ENCODE measurements at regions of chr1 and their contacts with region 1.

Region 1: DNA sequence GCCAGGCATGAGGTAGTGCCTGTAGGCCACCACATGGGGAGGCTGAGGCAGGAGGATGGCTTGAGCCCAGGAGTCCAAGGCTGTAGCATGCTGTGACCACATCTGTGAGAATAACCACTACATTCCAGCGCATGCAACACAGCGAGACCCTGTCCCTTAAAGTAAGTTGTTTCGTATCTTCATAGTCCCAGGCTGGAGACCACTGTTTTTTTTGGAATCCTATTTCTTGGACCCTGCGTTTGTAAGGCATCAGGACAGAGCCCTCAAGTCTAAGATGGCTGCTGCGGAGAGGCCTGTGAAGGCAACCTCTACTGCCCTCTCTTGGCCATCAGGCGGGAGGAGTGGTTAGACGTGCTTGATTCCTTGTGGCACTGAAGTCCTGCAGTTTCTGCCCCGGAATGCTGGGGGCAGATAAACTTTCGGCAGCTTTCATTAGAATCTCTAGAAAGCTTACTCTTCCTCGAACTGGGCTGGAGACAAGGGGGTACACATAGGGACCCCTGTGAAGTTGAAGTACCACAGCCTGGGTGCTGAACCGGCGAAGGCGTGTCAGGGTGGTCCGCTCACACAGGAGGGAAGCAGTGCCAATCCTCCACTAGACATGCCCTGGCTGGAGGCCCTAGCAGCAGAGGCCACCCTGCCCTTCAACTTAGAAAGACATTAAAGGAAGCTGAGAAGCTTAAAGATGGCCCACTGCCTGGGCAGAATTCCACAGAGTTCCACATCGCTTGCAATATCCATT is 36.6 kb downstream of the RABIF start:
- DNase-seq: peak; percentile 74
- ATAC-seq: peak; percentile 91
- H3K4me3 Mint-ChIP-seq: no peak overlapping the region
- H3K27ac Mint-ChIP-seq: no peak overlapping the region
- H3K4me1 Mint-ChIP-seq: peaks cover 6% of the 10 kb centered on the region
- H3K27me3 Mint-ChIP-seq: no peaks in the 10 kb centered on the region
- CTCF ChIP-seq: peak; percentile 71

Region 2: DNA sequence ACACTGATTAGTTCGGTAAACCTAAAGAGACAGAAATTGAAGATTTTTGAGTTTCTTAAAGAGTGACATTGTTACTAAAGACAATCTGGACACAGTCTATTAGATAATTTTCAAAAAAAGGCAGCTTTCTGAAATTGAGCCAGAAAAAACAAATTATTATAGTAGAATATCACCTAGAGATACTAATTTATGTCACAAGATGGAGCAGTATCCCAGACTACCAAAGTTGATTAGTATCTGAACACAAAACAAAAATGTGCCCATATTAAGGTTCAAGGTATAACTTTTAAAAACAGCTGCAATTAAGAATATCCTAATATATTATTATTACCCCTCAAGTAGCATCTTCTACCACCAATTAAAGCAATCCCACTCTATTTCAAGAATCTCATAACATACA is 101.6 kb before region 1 on chr1:
- CTCF ChIA-PET with region 1: interaction called, 9 read pairs
- POLR2A ChIA-PET with region 1: no interaction called
- intact Hi-C with region 1: loop called (anchors 5 kb)
- DNase-seq: no peak
- ATAC-seq: no peak
- H3K4me3 Mint-ChIP-seq: no peak overlapping the region
- H3K27ac Mint-ChIP-seq: no peak overlapping the region
- H3K4me1 Mint-ChIP-seq: no peaks in the 10 kb centered on the region
- H3K27me3 Mint-ChIP-seq: no peaks in the 10 kb centered on the region
- CTCF ChIP-seq: peak; percentile 17

Region 3: DNA sequence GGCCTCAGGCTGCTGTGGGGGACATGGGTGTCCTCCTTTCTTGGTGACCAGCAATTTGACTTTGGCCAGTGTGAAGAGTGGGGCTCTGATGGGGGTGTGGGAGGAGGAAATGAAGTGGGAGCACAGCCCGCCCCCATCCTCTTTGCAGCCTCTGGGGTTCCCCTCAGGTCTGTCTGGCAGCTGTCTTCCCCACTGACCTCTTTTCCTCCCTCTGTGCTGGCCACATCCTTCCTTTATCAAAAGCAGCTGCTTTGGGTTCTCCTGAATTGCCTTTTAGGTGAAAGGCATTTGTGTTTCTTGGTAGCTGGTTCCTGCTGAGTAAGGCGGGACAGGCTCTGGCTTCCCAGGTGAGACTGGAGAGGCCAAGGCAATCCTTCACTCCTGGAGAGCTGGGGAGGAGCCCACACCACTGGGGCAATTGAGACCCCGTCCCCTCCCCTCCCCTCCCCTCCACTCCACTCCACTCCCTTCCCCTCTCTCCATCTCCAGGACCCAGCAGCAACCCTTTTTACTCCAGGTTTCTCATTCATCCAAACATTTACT is 16.7 kb before region 1 on chr1:
- CTCF ChIA-PET with region 1: interaction called, 25 read pairs
- POLR2A ChIA-PET with region 1: interaction called, 4 read pairs
- intact Hi-C with region 1: no loop called
- DNase-seq: peak; percentile 61
- ATAC-seq: peak; percentile 82
- H3K4me3 Mint-ChIP-seq: peak overlapping the region; percentile 17
- H3K27ac Mint-ChIP-seq: peak overlapping the region; percentile 67
- H3K4me1 Mint-ChIP-seq: peaks cover 43% of the 10 kb centered on the region
- H3K27me3 Mint-ChIP-seq: no peaks in the 10 kb centered on the region
- CTCF ChIP-seq: no peak

Measured in activated CD8-positive, alpha-beta T cell treated with anti-CD3 and anti-CD28 coated beads for 36 hours (primary cell).